ENCODE measurements at regions of chr3 and their contacts with region 1.

Region 1: GRCh38 chr3:56915966-56916586 is 114.3 kb upstream of the ARHGEF3 start:
- DNase-seq: peak; percentile 72
- H3K4me3 Mint-ChIP-seq: peak overlapping the region; percentile 87
- H3K27ac Mint-ChIP-seq: peak overlapping the region; percentile 88
- H3K4me1 Mint-ChIP-seq: peaks cover 63% of the 10 kb centered on the region
- H3K27me3 Mint-ChIP-seq: no peaks in the 10 kb centered on the region

Region 2: DNA sequence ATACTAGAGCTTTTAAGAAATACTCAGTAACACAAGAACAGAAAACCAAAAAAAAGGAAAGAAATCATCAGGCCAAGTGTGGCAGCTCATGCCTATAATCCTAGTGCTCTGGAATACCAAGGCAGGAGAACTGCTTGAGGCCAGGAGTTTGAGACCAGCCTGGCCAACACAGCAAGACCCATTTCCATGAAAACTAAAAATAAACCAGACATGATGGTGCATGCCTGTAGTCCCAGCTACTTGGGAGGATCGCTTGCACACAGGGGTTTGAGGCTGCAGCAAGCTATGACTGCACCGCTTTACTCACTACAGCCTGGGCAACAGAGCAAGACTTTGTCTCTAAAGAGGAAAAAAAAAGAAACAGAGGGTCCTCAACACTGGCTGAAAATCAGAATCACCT is 251.3 kb before region 1 on chr3:
- intact Hi-C with region 1: no loop called
- DNase-seq: no peak
- H3K4me3 Mint-ChIP-seq: no peak overlapping the region
- H3K27ac Mint-ChIP-seq: no peak overlapping the region
- H3K4me1 Mint-ChIP-seq: peaks cover 15% of the 10 kb centered on the region
- H3K27me3 Mint-ChIP-seq: no peaks in the 10 kb centered on the region

Region 3: DNA sequence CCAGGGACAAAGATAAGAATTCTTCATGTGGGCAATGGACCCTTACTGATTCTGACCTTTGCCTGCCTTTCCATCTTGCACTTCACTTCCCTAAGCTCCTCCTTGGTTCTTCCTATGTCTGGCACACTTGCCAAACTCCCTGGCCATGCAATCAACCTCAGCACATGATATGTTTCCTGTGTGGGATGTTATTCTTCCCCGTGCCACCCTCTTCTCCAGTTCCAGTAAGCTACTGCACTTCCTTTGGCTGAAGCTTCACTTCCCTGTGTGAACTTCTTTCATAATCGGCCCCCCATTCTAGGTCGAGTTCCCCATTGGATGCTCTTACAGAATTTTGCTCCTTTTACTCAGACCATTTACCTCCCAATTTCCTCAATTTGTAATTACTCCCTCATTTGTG is 222.3 kb before region 1 on chr3:
- intact Hi-C with region 1: loop called (anchors 5 kb)
- DNase-seq: no peak
- H3K4me3 Mint-ChIP-seq: peak overlapping the region; percentile 18
- H3K27ac Mint-ChIP-seq: no peak overlapping the region
- H3K4me1 Mint-ChIP-seq: peaks cover 37% of the 10 kb centered on the region
- H3K27me3 Mint-ChIP-seq: no peaks in the 10 kb centered on the region

Region 4: GRCh38 chr3:56862352-56863074 is 53.6 kb before region 1 on chr3:
- intact Hi-C with region 1: loop called (anchors 1 kb)
- DNase-seq: no peak
- H3K4me3 Mint-ChIP-seq: peak overlapping the region; percentile 40
- H3K27ac Mint-ChIP-seq: peak overlapping the region; percentile 86
- H3K4me1 Mint-ChIP-seq: peaks cover 72% of the 10 kb centered on the region
- H3K27me3 Mint-ChIP-seq: no peaks in the 10 kb centered on the region

Region 5: GRCh38 chr3:56887402-56888025 is 28.6 kb before region 1 on chr3:
- intact Hi-C with region 1: loop called (anchors 2 kb)
- DNase-seq: no peak
- H3K4me3 Mint-ChIP-seq: no peak overlapping the region
- H3K27ac Mint-ChIP-seq: peak overlapping the region; percentile 41
- H3K4me1 Mint-ChIP-seq: peaks cover 56% of the 10 kb centered on the region
- H3K27me3 Mint-ChIP-seq: no peaks in the 10 kb centered on the region

Region 6: DNA sequence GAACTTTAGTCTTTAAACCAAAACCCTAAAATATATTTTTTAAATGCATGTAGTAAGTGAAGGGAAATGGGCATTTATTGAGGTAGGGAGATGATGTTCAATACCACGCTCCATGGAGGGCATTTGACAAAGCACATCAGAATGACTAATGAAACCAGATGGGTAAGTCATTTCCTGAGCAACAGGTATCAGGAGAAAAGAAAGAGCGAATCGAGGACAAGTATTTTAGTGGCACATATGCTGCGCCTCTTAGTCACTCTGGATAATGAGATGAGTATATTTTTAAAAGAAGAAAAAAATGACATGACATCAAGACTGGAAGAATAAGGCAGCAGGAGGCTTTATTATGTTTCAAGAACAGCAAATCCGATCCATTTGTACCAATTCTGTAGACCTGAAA is 14.6 kb after region 1 on chr3:
- intact Hi-C with region 1: loop called (anchors 2 kb)
- DNase-seq: no peak
- H3K4me3 Mint-ChIP-seq: no peak overlapping the region
- H3K27ac Mint-ChIP-seq: peak overlapping the region; percentile 70
- H3K4me1 Mint-ChIP-seq: peaks cover 40% of the 10 kb centered on the region
- H3K27me3 Mint-ChIP-seq: no peaks in the 10 kb centered on the region